ENCODE measurements at regions of chr5 and their contacts with region 1.

Region 1: GRCh38 chr5:140073296-140073695 is 30.2 kb upstream of the NRG2 start:
- DNase-seq: no peak
- H3K4me3 ChIP-seq: no peak overlapping the region
- H3K27ac ChIP-seq: no peak overlapping the region
- H3K4me1 ChIP-seq: no peaks in the 10 kb centered on the region
- H3K27me3 ChIP-seq: no peaks in the 10 kb centered on the region
- CTCF ChIP-seq: peak in 2 of 3 donors; percentile 36 to 69
- EP300 ChIP-seq: no peak
- POLR2A ChIP-seq: no peak

Region 2: DNA sequence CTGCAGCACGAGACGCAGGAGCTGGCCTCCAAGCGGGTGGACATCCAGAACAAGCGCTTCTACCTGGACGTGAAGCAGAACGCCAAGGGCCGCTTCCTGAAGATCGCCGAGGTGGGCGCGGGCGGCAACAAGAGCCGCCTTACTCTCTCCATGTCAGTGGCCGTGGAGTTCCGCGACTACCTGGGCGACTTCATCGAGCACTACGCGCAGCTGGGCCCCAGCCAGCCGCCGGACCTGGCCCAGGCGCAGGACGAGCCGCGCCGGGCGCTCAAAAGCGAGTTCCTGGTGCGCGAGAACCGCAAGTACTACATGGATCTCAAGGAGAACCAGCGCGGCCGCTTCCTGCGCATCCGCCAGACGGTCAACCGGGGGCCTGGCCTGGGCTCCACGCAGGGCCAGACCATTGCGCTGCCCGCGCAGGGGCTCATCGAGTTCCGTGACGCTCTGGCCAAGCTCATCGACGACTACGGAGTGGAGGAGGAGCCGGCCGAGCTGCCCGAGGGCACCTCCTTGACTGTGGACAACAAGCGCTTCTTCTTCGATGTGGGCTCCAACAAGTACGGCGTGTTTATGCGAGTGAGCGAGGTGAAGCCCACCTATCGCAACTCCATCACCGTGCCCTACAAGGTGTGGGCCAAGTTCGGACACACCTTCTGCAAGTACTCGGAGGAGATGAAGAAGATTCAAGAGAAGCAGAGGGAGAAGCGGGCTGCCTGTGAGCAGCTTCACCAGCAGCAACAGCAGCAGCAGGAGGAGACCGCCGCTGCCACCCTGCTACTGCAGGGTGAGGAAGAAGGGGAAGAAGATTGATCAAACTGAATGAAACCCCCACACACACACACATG is 41.3 kb after region 1 on chr5:
- intact Hi-C with region 1: no loop called
- DNase-seq: peak; percentile 59 to 81 (median 66)
- H3K4me3 ChIP-seq: peak overlapping the region; percentile 67
- H3K27ac ChIP-seq: peak overlapping the region; percentile 82 to 89
- H3K4me1 ChIP-seq: peaks cover 19% of the 10 kb centered on the region
- H3K27me3 ChIP-seq: no peaks in the 10 kb centered on the region
- CTCF ChIP-seq: no peak
- EP300 ChIP-seq: no peak
- POLR2A ChIP-seq: no peak

Region 3: DNA sequence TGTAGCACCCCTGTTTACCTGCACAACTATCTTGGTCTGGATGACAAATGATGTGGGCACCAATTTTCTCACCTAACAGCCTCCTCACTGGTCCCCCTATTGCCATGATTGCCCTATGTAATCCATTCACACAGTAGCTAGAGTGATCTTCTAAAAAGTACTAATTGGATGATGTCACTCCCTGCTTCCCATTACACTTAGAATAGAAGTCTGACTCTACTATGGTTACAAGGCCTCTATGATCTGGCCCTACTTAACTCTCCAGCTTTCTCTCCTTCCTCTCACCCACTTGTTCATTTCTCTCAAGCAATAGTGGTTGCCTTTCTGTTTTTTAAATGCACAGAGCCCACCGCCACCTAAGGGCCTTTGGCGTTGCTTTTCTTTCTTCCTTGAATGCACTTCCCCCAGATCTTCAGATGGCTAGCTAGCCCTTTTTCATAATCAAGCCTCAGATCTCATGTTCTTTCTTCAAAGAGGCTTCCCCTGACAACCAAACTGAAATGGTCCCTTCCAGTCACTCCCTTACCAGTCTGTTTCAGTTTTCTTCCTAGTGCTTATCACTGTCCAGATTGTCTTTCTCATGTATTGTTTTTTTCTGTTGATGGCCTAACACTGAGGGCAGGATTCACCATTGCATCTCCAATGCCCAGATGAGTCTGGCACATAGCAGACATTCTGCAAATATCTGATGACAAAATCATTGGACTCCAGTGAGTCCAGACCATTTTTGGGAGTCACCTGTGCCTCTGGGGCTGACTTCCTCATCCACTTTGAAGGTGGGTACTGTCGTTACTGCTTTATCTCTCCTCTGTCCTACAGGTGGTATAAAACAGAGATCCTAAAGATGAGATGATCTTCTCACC is 61.2 kb after region 1 on chr5:
- intact Hi-C with region 1: loop called in 1 of 4 experiments (anchors 5 kb)
- DNase-seq: no peak
- H3K4me3 ChIP-seq: no peak overlapping the region
- H3K27ac ChIP-seq: no peak overlapping the region
- H3K4me1 ChIP-seq: no peaks in the 10 kb centered on the region
- H3K27me3 ChIP-seq: no peaks in the 10 kb centered on the region
- CTCF ChIP-seq: no peak
- EP300 ChIP-seq: no peak
- POLR2A ChIP-seq: no peak

Region 4: GRCh38 chr5:140145818-140146522 is 72.7 kb after region 1 on chr5:
- intact Hi-C with region 1: loop called in 1 of 4 experiments (anchors 5 kb)
- DNase-seq: peak; percentile 68 to 88 (median 77)
- H3K4me3 ChIP-seq: peak overlapping the region; percentile 31
- H3K27ac ChIP-seq: no peak overlapping the region
- H3K4me1 ChIP-seq: peaks cover 7% of the 10 kb centered on the region
- H3K27me3 ChIP-seq: no peaks in the 10 kb centered on the region
- CTCF ChIP-seq: peak; percentile 67 to 74 (median 73)
- EP300 ChIP-seq: no peak
- POLR2A ChIP-seq: no peak

Region 5: DNA sequence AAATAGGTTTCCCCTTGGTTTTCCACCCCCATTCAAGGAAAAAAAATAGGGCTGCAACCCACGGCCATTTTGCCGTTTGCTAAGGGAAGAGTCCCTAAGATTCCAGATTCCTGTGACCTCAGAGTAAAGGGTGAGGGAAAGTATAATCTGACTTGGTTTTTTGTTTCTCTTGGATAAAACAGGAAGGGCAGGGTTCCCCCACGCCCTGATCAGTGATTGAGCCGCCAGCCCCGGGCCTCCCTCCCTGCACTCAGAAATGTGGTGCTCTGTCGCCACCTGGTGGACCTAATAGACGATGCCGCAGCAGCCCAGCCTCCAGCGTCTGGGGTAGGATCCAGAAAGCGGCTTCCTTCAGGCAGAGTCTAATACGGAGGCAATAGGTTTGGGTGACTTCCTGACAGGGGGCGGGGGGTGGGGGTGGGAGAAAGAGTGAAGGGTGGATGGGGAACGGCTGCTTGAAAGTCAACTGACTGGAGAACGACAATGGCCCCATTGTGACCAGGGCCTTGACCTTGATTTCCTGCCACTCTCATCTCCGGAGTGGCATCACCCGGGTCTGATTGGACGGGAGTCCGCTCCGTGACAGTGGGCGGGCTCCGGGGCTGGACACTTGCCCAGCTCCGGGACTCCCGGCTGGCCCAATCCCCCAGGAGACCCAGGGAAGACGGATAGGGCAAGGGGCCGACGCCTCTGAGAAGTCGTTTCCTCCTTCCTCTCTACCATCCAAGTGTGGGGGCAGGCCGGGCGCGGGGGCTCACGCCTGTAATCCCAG is 83.9 kb after region 1 on chr5:
- intact Hi-C with region 1: loop called in 3 of 4 experiments (anchors 2 kb)
- DNase-seq: peak; percentile 79 to 92 (median 91)
- H3K4me3 ChIP-seq: peak overlapping the region; percentile 14
- H3K27ac ChIP-seq: no peak overlapping the region
- H3K4me1 ChIP-seq: no peaks in the 10 kb centered on the region
- H3K27me3 ChIP-seq: no peaks in the 10 kb centered on the region
- CTCF ChIP-seq: peak; percentile 83 to 89 (median 89)
- EP300 ChIP-seq: no peak
- POLR2A ChIP-seq: no peak